ENCODE measurements at regions of chrX and their contacts with region 1.

Region 1: GRCh38 chrX:107776649-107777535 is 641 bp upstream of the NCBP2L start:
- DNase-seq: peak; percentile 79
- ATAC-seq: peak; percentile 81
- H3K4me3 ChIP-seq: peak overlapping the region; percentile 38 to 55
- H3K27ac ChIP-seq: no peak overlapping the region
- H3K4me1 ChIP-seq: peaks cover 8 to 14% of the 10 kb centered on the region in 2 experiments; a peak in 2 of 4 replicates
- H3K27me3 ChIP-seq: no peaks in the 10 kb centered on the region
- CTCF ChIP-seq: peak; percentile 59 to 85 (median 64)
- POLR2A ChIP-seq: no peak
- RAD21 ChIP-seq: peak; percentile 89

Region 2: DNA sequence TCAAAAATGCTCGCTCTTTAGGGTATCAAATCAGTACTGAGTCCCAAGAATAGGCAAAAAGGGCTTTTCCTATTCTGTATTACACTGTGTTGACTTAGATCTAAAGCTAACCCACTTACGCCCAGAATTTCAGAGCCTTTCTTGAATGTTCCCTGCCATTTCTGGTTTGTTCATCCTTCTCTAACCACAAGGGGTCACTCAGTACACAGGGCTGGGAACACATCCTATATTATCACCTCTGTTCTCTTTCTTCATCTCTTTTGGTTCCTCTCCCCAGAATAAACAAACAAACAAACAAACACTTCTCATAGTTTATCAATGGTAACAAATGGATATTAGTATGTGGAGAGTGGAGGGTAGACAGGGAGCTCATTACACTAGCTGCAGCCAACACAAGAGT is 751.3 kb before region 1 on chrX:
- CTCF ChIA-PET with region 1: no interaction called
- POLR2A ChIA-PET with region 1: no interaction called
- RAD21 ChIA-PET with region 1: interaction called in 1 of 2 experiments, 3 read pairs
- intact Hi-C with region 1: loop called (anchors 2 kb)
- DNase-seq: peak; percentile 27
- ATAC-seq: peak; percentile 81
- H3K4me3 ChIP-seq: no peak overlapping the region
- H3K27ac ChIP-seq: no peak overlapping the region
- H3K4me1 ChIP-seq: no peaks in the 10 kb centered on the region
- H3K27me3 ChIP-seq: no peaks in the 10 kb centered on the region
- CTCF ChIP-seq: peak; percentile 54 to 69 (median 63); a peak in 5 of 6 replicates
- POLR2A ChIP-seq: no peak
- RAD21 ChIP-seq: peak; percentile 83

Region 3: GRCh38 chrX:107537815-107538214 is 239.1 kb before region 1 on chrX:
- CTCF ChIA-PET with region 1: interaction called, 10 read pairs
- POLR2A ChIA-PET with region 1: no interaction called
- RAD21 ChIA-PET with region 1: interaction called in 1 of 2 experiments, 3 read pairs
- intact Hi-C with region 1: loop called (anchors 5 kb)
- DNase-seq: peak; percentile 31
- ATAC-seq: peak; percentile 75
- H3K4me3 ChIP-seq: no peak overlapping the region
- H3K27ac ChIP-seq: no peak overlapping the region
- H3K4me1 ChIP-seq: no peaks in the 10 kb centered on the region
- H3K27me3 ChIP-seq: no peaks in the 10 kb centered on the region
- CTCF ChIP-seq: peak; percentile 35 to 54 (median 47); a peak in 4 of 6 replicates
- POLR2A ChIP-seq: no peak
- RAD21 ChIP-seq: peak; percentile 67

Region 4: GRCh38 chrX:107654872-107655761 is 121.8 kb before region 1 on chrX:
- CTCF ChIA-PET with region 1: interaction called, 45 read pairs
- POLR2A ChIA-PET with region 1: no interaction called
- RAD21 ChIA-PET with region 1: interaction called, 3 to 4 read pairs
- intact Hi-C with region 1: loop called (anchors 1 kb)
- DNase-seq: peak; percentile 34
- ATAC-seq: peak; percentile 88
- H3K4me3 ChIP-seq: no peak overlapping the region
- H3K27ac ChIP-seq: peak overlapping the region; percentile 43; the same call in 1 of the 2 replicates
- H3K4me1 ChIP-seq: peaks cover 15% of the 10 kb centered on the region in 2 experiments
- H3K27me3 ChIP-seq: no peaks in the 10 kb centered on the region
- CTCF ChIP-seq: peak; percentile 39 to 81 (median 73); a peak in 5 of 6 replicates
- POLR2A ChIP-seq: no peak
- RAD21 ChIP-seq: peak; percentile 42; the same call in 1 of the 2 replicates

Region 5: DNA sequence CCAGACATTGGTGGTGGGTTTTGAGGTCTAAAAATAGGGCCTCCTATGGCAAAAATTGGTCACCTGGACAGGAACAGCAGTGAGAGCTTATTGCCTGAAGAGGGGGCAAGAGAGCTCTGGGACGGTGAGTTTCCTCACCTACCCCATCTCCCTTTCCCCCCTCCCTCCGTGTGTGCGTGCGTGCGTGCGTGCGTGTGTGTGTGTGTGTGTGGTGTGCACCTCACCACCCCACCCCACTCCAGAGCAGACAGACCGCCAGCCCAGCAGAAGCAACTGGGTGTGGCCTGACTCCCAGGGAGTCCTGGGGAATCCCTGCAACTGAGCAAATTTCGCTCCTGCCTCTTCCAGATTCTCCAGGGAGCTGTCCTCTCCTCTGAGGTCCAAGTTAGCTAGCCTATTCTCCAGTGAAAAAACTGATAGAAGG is 103.9 kb before region 1 on chrX:
- CTCF ChIA-PET with region 1: interaction called, 15 read pairs
- POLR2A ChIA-PET with region 1: interaction called, 5 read pairs
- RAD21 ChIA-PET with region 1: interaction called, 6 to 14 read pairs
- intact Hi-C with region 1: loop called (anchors 2 kb)
- DNase-seq: peak; percentile 63
- ATAC-seq: peak; percentile 75
- H3K4me3 ChIP-seq: no peak overlapping the region
- H3K27ac ChIP-seq: no peak overlapping the region
- H3K4me1 ChIP-seq: peaks cover 32 to 42% of the 10 kb centered on the region in 2 experiments
- H3K27me3 ChIP-seq: no peaks in the 10 kb centered on the region
- CTCF ChIP-seq: peak in 2 of 3 experiments; percentile 49 to 64; a peak in 4 of 6 replicates
- POLR2A ChIP-seq: no peak
- RAD21 ChIP-seq: no peak

Region 6: DNA sequence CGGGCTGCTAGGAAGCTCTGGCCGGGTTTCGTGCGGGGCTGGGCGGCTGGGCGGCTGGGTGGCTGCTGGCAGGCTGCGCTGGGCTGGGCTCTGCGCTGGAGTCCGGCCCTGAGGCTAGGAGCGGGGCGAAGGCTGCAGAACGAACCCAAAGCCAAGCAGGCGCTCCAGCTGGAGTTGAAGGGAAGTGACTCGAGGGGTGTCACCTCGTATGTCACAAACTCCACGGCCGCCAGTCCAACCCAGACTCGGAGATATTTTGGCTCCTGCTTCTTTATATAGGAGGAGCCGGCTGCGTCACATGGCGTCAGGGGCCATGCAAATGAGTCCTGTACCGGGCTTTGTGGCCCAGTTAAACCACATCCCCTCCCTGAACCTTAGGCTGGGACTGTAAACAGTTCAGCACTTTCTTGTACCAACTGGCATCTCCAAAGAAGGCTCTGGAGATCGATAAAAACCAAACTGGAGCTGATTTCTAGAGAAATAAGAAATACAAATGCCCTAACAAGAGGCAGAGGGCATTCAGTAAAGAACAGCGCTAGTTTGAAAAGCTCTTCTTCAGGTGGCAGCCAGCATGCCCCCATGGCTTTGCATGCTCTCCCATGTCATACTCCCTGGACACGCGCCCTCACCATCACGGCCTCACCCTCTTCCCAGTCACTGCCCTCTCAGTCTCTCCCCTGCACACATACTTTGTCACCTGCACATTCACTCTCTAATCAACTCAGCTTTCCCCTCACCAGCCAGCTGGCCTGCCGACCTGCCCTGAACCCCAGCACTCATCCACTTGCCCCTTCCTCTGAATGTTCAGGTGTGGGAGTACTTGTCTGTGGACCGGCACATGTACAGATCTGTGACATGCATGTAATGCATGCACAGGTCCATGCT is 59.8 kb before region 1 on chrX:
- CTCF ChIA-PET with region 1: interaction called, 5 read pairs
- POLR2A ChIA-PET with region 1: interaction called, 3 read pairs
- RAD21 ChIA-PET with region 1: interaction called in 1 of 2 experiments, 3 read pairs
- intact Hi-C with region 1: loop called (anchors 10 kb)
- DNase-seq: peak; percentile 46
- ATAC-seq: peak; percentile 81
- H3K4me3 ChIP-seq: peak overlapping the region; percentile 65 to 66
- H3K27ac ChIP-seq: peak overlapping the region; percentile 62; the same call in 1 of the 2 replicates
- H3K4me1 ChIP-seq: peaks cover 13 to 16% of the 10 kb centered on the region in 2 experiments
- H3K27me3 ChIP-seq: no peaks in the 10 kb centered on the region
- CTCF ChIP-seq: no peak
- POLR2A ChIP-seq: no peak
- RAD21 ChIP-seq: no peak

Region 7: GRCh38 chrX:107894038-107894437 is 117.1 kb after region 1 on chrX:
- CTCF ChIA-PET with region 1: interaction called, 7 read pairs
- POLR2A ChIA-PET with region 1: no interaction called
- RAD21 ChIA-PET with region 1: interaction called in 1 of 2 experiments, 4 read pairs
- intact Hi-C with region 1: loop called (anchors 5 kb)
- DNase-seq: peak; percentile 51
- ATAC-seq: peak; percentile 83
- H3K4me3 ChIP-seq: no peak overlapping the region
- H3K27ac ChIP-seq: no peak overlapping the region
- H3K4me1 ChIP-seq: no peaks in the 10 kb centered on the region
- H3K27me3 ChIP-seq: no peaks in the 10 kb centered on the region
- CTCF ChIP-seq: peak; percentile 25 to 54 (median 50); a peak in 5 of 6 replicates
- POLR2A ChIP-seq: no peak
- RAD21 ChIP-seq: peak; percentile 74

Region 8: GRCh38 chrX:109040057-109040456 is 1263.2 kb after region 1 on chrX:
- CTCF ChIA-PET with region 1: no interaction called
- POLR2A ChIA-PET with region 1: no interaction called
- RAD21 ChIA-PET with region 1: no interaction called
- intact Hi-C with region 1: no loop called
- DNase-seq: no peak
- ATAC-seq: no peak
- H3K4me3 ChIP-seq: no peak overlapping the region
- H3K27ac ChIP-seq: no peak overlapping the region
- H3K4me1 ChIP-seq: no peaks in the 10 kb centered on the region
- H3K27me3 ChIP-seq: no peaks in the 10 kb centered on the region
- CTCF ChIP-seq: no peak
- POLR2A ChIP-seq: no peak
- RAD21 ChIP-seq: no peak

Measured in HCT116 (cell line).